Activated B cell treated with CpG ODN at 0.5 μM for 24 hours (primary cell): ENCODE measurements at regions of chr16 and their contacts with region 1.

Region 1: GRCh38 chr16:48632137-48632774 is 22.3 kb upstream of the N4BP1 start:
- DNase-seq: no peak
- ATAC-seq: no peak
- H3K4me3 Mint-ChIP-seq: no peak overlapping the region
- H3K27ac Mint-ChIP-seq: no peak overlapping the region
- H3K4me1 Mint-ChIP-seq: peaks cover 8% of the 10 kb centered on the region
- H3K27me3 Mint-ChIP-seq: peaks cover 12% of the 10 kb centered on the region
- CTCF ChIP-seq: no peak

Region 2: GRCh38 chr16:46947900-46948547 is 1684.2 kb before region 1 on chr16:
- CTCF ChIA-PET with region 1: no interaction called
- POLR2A ChIA-PET with region 1: no interaction called
- intact Hi-C with region 1: loop called (anchors 10 kb)
- DNase-seq: no peak
- ATAC-seq: peak; percentile 74
- H3K4me3 Mint-ChIP-seq: no peak overlapping the region
- H3K27ac Mint-ChIP-seq: no peak overlapping the region
- H3K4me1 Mint-ChIP-seq: peaks cover 7% of the 10 kb centered on the region
- H3K27me3 Mint-ChIP-seq: no peaks in the 10 kb centered on the region
- CTCF ChIP-seq: no peak

Region 3: GRCh38 chr16:48231727-48232492 is 400.3 kb before region 1 on chr16:
- CTCF ChIA-PET with region 1: interaction called, 5 read pairs
- POLR2A ChIA-PET with region 1: no interaction called
- intact Hi-C with region 1: loop called (anchors 5 kb)
- DNase-seq: no peak
- ATAC-seq: no peak
- H3K4me3 Mint-ChIP-seq: no peak overlapping the region
- H3K27ac Mint-ChIP-seq: no peak overlapping the region
- H3K4me1 Mint-ChIP-seq: no peaks in the 10 kb centered on the region
- H3K27me3 Mint-ChIP-seq: peaks cover 9% of the 10 kb centered on the region
- CTCF ChIP-seq: no peak

Region 4: GRCh38 chr16:48353565-48354163 is 278.6 kb before region 1 on chr16:
- CTCF ChIA-PET with region 1: interaction called, 11 read pairs
- POLR2A ChIA-PET with region 1: no interaction called
- intact Hi-C with region 1: loop called (anchors 1 kb)
- DNase-seq: no peak
- ATAC-seq: peak; percentile 93
- H3K4me3 Mint-ChIP-seq: no peak overlapping the region
- H3K27ac Mint-ChIP-seq: peak overlapping the region; percentile 5
- H3K4me1 Mint-ChIP-seq: peaks cover 28% of the 10 kb centered on the region
- H3K27me3 Mint-ChIP-seq: no peaks in the 10 kb centered on the region
- CTCF ChIP-seq: peak; percentile 53

Region 5: DNA sequence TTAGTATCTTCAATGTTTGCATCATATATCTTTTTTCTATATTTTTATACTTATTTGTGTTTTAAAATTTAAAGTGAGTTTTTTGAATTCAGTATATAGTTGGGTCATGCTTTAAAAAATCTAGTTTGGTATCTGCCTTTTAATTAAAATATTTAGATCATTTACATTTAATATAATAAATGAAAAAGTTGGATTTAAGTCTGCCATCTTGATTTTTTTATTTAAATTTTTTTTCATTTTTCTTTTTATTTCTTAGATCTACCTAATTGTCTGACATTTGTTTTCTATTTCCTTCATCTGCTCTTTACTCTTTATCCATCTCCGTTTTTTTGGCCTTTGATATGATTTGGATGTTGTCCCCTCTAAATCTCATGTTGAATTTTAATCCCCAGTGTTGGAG is 27.7 kb after region 1 on chr16:
- CTCF ChIA-PET with region 1: no interaction called
- POLR2A ChIA-PET with region 1: no interaction called
- intact Hi-C with region 1: no loop called
- DNase-seq: no peak
- ATAC-seq: no peak
- H3K4me3 Mint-ChIP-seq: no peak overlapping the region
- H3K27ac Mint-ChIP-seq: no peak overlapping the region
- H3K4me1 Mint-ChIP-seq: no peaks in the 10 kb centered on the region
- H3K27me3 Mint-ChIP-seq: peaks cover 4% of the 10 kb centered on the region
- CTCF ChIP-seq: no peak